PC-3 (cell line): ENCODE measurements at regions of chr4 and their contacts with region 1.

Region 1: DNA sequence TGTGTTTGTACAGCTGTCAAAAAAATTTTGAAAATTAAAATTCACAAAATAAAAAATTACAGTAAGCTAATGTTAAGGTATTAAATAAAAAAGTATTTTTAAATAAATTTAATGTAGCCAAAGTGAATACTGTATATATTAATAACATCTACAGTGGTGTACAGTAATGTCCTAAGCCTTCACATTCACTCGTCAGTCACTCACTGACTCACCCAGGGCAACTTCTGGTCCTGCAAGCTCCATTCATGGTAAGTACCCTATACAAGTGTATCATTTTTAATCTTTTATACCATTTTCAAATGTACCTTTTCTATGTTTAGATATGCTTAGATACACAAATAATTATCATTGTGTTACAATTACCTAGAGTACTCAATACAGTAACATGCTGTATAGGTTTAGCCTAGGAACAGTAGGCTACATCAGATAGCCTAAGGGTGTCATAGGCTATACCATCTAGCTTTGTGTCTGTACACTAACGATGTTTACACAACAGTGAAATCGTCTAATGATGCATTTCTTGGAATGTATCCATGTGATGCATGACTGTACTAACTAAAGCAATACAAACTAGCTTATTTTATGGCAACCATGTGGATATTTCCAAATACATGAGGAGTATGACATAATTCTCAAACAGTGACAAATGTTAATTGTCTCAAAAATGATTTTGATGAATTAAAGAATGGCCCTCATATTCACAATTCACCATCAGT is 13.7 kb downstream of the DDX60 start:
- DNase-seq: peak; percentile 98
- ATAC-seq: peak; percentile 99
- H3K4me3 ChIP-seq: no peak overlapping the region
- H3K27ac ChIP-seq: peak overlapping the region; percentile 50
- H3K4me1 ChIP-seq: peaks cover 11% of the 10 kb centered on the region
- H3K27me3 ChIP-seq: no peaks in the 10 kb centered on the region
- CTCF ChIP-seq: no peak

Region 2: GRCh38 chr4:168335621-168336020 is 30.7 kb after region 1 on chr4:
- CTCF ChIA-PET with region 1: no interaction called
- POLR2A ChIA-PET with region 1: interaction called, 13 read pairs
- intact Hi-C with region 1: no loop called
- DNase-seq: no peak
- ATAC-seq: no peak
- H3K4me3 ChIP-seq: no peak overlapping the region
- H3K27ac ChIP-seq: no peak overlapping the region
- H3K4me1 ChIP-seq: no peaks in the 10 kb centered on the region
- H3K27me3 ChIP-seq: no peaks in the 10 kb centered on the region
- CTCF ChIP-seq: no peak

Region 3: GRCh38 chr4:168585168-168586091 is 280.5 kb after region 1 on chr4:
- CTCF ChIA-PET with region 1: no interaction called
- POLR2A ChIA-PET with region 1: no interaction called
- intact Hi-C with region 1: no loop called
- DNase-seq: peak; percentile 82
- ATAC-seq: peak; percentile 39
- H3K4me3 ChIP-seq: no peak overlapping the region
- H3K27ac ChIP-seq: peak overlapping the region; percentile 100
- H3K4me1 ChIP-seq: peaks cover 70% of the 10 kb centered on the region
- H3K27me3 ChIP-seq: no peaks in the 10 kb centered on the region
- CTCF ChIP-seq: peak; percentile 72